Thyroid gland (tissue), 4 donors: ENCODE measurements at regions of chr9 and their contacts with region 1.

Region 1: DNA sequence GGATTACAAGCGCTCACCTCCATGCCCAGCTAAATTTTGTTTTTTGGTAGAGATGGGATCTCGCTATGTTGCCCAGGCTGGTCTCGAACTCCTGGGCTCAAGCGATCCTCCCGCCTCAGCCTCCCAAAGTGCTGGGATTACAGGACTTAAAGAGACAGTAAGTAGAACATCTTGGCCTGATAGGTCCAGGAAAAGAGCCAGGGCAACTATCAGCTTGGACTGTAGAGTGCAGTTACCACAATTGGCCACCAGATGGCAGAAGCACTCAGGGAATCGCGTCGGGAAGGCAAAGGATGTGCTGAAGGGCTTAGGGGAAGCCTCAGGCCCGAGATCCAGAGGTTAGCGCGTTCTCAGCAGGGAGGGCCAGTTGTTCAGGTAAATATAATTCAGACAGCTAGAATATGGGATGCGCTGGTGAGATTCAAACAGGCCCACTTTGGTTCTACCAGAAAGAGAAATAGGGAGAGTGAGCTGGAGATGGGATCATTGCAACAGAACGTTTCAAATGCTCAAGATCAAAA is 21.5 kb downstream of the C9orf57 start:
- DNase-seq: peak; percentile 74 to 80
- H3K4me3 ChIP-seq: no peak overlapping the region
- H3K27ac ChIP-seq: no peak overlapping the region
- H3K4me1 ChIP-seq: no peaks in the 10 kb centered on the region
- H3K27me3 ChIP-seq: no peaks in the 10 kb centered on the region
- CTCF ChIP-seq: peak; percentile 88 to 97 (median 93)
- POLR2A ChIP-seq: no peak

Region 2: GRCh38 chr9:72271613-72272478 is 232.9 kb after region 1 on chr9:
- intact Hi-C with region 1: loop called (anchors 5 kb)
- DNase-seq: peak; percentile 45 to 50
- H3K4me3 ChIP-seq: no peak overlapping the region
- H3K27ac ChIP-seq: no peak overlapping the region
- H3K4me1 ChIP-seq: no peaks in the 10 kb centered on the region
- H3K27me3 ChIP-seq: no peaks in the 10 kb centered on the region
- CTCF ChIP-seq: peak; percentile 69 to 88 (median 84)
- POLR2A ChIP-seq: no peak

Region 3: GRCh38 chr9:72473474-72474261 is 434.7 kb after region 1 on chr9:
- intact Hi-C with region 1: no loop called
- DNase-seq: no peak
- H3K4me3 ChIP-seq: no peak overlapping the region
- H3K27ac ChIP-seq: no peak overlapping the region
- H3K4me1 ChIP-seq: peaks cover 7 to 16% of the 10 kb centered on the region in 2 donors
- H3K27me3 ChIP-seq: no peaks in the 10 kb centered on the region
- CTCF ChIP-seq: no peak
- POLR2A ChIP-seq: no peak

Region 4: DNA sequence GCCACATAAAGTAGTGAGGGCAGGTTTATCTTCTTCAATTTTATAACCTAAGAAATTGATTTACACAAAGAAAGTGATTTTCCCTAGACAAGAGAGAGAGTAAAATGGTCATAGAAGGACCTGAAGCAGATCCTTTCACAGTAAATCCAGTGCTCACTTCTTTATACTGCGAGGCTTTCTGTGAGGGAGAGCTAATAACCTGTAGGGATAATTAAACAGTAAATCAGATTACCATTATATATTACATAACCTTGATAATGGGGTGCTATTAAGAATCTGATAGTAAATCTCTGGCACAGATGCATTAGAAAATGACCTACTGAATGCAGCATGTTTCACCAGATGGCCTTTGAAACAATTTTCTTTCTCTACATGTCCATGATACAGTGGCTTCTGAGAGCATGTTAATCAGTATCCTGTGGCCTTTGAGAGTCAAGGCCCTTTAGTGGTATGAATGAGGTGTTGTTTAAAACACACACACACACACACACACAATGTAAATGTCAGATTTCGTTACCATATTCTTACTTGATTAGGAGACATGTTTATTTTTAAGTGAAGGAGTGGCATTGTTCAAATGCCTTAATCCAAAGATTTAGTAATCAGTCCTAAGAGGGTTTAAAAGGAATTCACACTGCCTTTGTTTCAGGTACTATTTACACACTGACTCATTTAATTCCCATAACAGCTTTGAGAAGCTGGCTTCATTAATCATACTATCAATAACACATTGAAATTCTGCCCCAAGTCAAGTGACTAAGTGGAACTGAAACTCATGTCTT is 789.2 kb after region 1 on chr9:
- intact Hi-C with region 1: loop called (anchors 10 kb)
- DNase-seq: no peak
- H3K4me3 ChIP-seq: no peak overlapping the region
- H3K27ac ChIP-seq: no peak overlapping the region
- H3K4me1 ChIP-seq: no peaks in the 10 kb centered on the region
- H3K27me3 ChIP-seq: no peaks in the 10 kb centered on the region
- CTCF ChIP-seq: no peak
- POLR2A ChIP-seq: no peak